ENCODE measurements at regions of chr3 and their contacts with region 1.

Region 1: GRCh38 chr3:138347960-138348753 is at the start of gene MRAS:
- DNase-seq: peak; percentile 78
- H3K4me3 ChIP-seq: peak within 1 kb of the TSS; percentile 70 to 80
- H3K27ac ChIP-seq: peak within 1 kb of the TSS; percentile 74 to 96
- H3K4me1 ChIP-seq: no peaks in the 10 kb centered on the region
- H3K27me3 ChIP-seq: no peaks in the 10 kb centered on the region
- CTCF ChIP-seq: peak in 1 of 3 experiments; percentile 2
- POLR2A ChIP-seq: no peak
- total RNA-seq, gene MRAS: 21.7 to 35.7 TPM

Region 2: GRCh38 chr3:138314751-138315150 is 33.4 kb before region 1 on chr3:
- intact Hi-C with region 1: no loop called
- DNase-seq: no peak
- H3K4me3 ChIP-seq: no peak overlapping the region
- H3K27ac ChIP-seq: no peak overlapping the region
- H3K4me1 ChIP-seq: peaks cover 8% of the 10 kb centered on the region
- H3K27me3 ChIP-seq: no peaks in the 10 kb centered on the region
- CTCF ChIP-seq: no peak
- POLR2A ChIP-seq: no peak

Region 3: GRCh38 chr3:138408751-138409161 is 60.6 kb after region 1 on chr3:
- intact Hi-C with region 1: loop called (anchors 10 kb)
- DNase-seq: peak; percentile 40
- H3K4me3 ChIP-seq: no peak overlapping the region
- H3K27ac ChIP-seq: no peak overlapping the region
- H3K4me1 ChIP-seq: peaks cover 8% of the 10 kb centered on the region
- H3K27me3 ChIP-seq: no peaks in the 10 kb centered on the region
- CTCF ChIP-seq: no peak
- POLR2A ChIP-seq: no peak

Region 4: GRCh38 chr3:138717348-138717747 is 369.2 kb after region 1 on chr3:
- intact Hi-C with region 1: no loop called
- DNase-seq: no peak
- H3K4me3 ChIP-seq: no peak overlapping the region
- H3K27ac ChIP-seq: no peak overlapping the region
- H3K4me1 ChIP-seq: no peaks in the 10 kb centered on the region
- H3K27me3 ChIP-seq: no peaks in the 10 kb centered on the region
- CTCF ChIP-seq: no peak
- POLR2A ChIP-seq: no peak

Measured in testis (tissue), 5 donors.